ENCODE measurements at regions of chr21 and their contacts with region 1.

Region 1: DNA sequence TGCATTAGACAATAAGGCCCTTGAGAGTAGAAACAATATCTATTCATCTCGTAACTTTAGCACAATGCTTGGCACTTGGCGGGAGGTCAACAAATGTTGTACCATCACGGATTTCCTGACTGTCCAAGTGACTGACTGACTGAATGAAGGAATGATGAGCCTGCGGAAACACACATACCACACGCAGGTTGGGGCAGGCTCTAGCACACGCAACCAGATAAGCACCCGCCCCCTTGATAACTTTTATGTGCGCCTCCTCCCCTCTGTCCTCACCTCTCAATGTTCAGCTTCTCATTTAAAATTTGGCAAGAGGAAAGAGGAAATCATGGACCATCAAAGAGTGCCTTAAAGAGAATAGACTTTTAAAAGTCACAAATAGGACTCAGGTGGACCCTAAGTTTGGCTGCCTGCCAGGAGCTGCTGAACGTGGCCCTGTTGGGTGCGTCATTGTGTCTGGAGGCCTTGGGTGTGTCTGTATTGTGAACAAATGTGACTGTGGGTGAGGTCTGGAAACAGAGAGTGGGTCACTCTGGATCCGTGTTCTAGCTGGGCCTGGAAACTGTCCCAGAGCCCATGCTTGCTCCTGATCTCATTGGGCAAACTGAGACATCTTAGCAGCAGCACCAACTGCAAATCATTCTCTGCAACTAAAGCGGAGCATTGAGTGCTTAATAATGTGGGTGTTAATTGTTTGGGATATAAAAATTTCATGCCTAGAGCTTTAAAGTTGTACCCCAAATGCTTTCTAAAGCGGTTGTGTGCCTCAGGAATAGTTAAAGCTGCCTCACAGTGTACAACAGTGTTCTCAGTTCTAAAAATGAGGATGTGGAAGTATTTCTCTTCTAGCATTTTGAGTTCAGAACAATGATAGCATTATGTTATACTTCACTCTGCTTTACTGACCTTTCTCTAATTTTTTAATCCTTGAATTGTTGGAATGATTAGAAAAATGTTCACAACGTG is 47.6 kb upstream of the ABCG1 start:
- H3K4me3 Mint-ChIP-seq: no peak overlapping the region
- H3K27ac Mint-ChIP-seq: peak overlapping the region; percentile 17
- H3K4me1 Mint-ChIP-seq: peaks cover 21% of the 10 kb centered on the region
- H3K27me3 Mint-ChIP-seq: peaks cover 10% of the 10 kb centered on the region

Region 2: GRCh38 chr21:42209819-42210479 is 38.6 kb after region 1 on chr21:
- intact Hi-C with region 1: loop called (anchors 5 kb)
- H3K4me3 Mint-ChIP-seq: no peak overlapping the region
- H3K27ac Mint-ChIP-seq: no peak overlapping the region
- H3K4me1 Mint-ChIP-seq: peaks cover 34% of the 10 kb centered on the region
- H3K27me3 Mint-ChIP-seq: peaks cover 8% of the 10 kb centered on the region

Region 3: DNA sequence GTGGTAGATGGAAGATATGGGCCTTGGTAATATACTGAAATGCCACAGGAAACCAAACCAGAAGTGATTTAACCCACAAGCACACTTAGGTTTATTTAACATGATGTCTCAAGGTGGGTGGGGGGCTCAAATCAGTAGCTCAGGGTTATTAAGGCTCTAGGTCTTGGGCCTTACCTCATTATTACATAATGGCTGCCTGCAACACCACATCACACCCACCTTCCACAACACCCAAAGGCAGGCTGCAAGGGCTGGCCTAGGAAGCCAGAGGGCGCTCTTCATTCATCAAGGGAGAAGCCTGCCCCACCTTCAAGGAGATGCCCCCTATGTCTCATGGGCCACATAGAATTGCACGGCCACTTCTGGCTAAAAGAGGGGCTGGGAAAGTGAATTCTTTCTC is 188.9 kb after region 1 on chr21:
- intact Hi-C with region 1: no loop called
- H3K4me3 Mint-ChIP-seq: no peak overlapping the region
- H3K27ac Mint-ChIP-seq: no peak overlapping the region
- H3K4me1 Mint-ChIP-seq: peaks cover 10% of the 10 kb centered on the region
- H3K27me3 Mint-ChIP-seq: peaks cover 14% of the 10 kb centered on the region

Measured in dendritic cell treated with granulocyte-macrophage colony-stimulating factor and Interleukin-4, amounts not matched to agents 40 ng/mL and 50 ng/mL, for 4 days (primary cell).